ENCODE measurements at regions of chr15 and their contacts with region 1.

Region 1: DNA sequence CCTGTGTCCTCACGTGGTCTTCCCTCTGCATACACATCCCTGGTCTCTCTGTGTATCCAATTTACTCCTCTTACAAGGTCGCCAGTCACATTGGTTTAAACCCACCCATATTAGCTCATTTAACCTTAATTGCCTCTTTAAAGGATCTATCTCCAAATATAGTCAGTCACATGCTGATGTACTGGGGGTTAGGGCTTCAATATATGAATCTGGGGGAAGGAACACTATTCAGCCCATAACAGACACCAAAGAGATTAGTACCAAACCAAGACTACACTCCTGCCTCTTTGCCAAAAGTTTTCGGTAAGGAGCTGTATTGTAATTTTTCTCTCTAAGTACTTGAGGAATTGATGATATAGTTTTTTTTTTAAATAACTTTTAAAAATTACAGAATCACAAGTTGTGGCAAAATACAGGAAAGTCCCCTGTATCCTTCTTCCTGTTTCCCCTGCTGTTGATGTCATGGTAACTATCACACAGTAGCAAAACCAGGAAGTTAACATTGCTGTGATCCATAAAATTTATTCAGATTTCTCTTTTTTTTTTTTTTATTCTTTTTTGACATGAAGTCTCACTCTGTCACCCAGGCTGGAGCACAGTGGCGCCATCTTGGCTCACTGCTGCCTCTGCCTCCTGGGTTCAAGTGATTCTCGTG is 67.8 kb downstream of the SLCO3A1 start:
- DNase-seq: no peak
- H3K4me3 Mint-ChIP-seq: peak overlapping the region; percentile 31
- H3K27ac Mint-ChIP-seq: peak overlapping the region; percentile 50
- H3K4me1 Mint-ChIP-seq: peaks cover 38% of the 10 kb centered on the region
- H3K27me3 Mint-ChIP-seq: no peaks in the 10 kb centered on the region

Region 2: DNA sequence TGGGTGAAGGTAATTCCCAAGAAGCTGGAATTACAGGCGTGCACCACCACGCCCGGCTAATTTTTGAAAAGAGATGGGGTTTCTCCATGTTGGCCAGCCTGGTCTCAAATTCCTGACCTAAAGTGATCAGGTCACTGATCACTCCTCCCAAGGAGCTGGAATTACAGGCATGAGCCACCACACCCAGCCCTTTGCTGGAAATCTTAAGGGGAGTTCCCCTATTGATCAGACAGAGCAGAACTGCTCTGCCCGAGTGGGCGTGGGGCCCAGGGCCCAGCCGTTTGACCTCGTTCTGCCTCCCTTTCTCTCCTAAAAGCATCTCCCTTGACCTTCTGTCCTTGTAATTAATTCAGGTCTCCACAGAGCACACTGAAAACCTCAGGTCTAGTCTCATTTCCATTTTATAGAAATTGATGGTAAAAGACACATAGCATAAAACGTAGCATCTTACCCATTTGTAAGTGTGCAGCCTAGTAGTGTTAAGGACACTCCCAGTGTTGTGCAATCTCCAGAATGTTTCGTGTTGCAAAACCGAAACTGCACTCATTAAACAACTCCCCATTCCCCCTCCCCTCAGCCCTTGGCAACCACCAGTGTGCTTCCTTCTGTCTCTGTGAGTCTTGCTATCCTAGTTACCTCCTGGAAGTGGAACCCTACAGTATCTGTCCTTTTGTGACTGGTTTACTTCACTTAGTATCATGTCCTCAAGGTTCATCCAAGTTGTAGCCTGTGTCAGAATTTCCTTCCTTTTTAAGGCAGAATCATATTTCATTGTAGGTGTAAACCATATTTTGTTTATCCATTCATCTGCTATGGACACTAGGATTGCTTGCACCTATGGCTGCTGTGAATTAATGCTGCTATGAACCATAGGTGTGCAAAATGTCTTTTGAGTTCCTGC is 21.6 kb after region 1 on chr15:
- intact Hi-C with region 1: loop called (anchors 2 kb)
- DNase-seq: peak; percentile 44
- H3K4me3 Mint-ChIP-seq: peak overlapping the region; percentile 42
- H3K27ac Mint-ChIP-seq: peak overlapping the region; percentile 84
- H3K4me1 Mint-ChIP-seq: peaks cover 40% of the 10 kb centered on the region
- H3K27me3 Mint-ChIP-seq: no peaks in the 10 kb centered on the region

Region 3: GRCh38 chr15:91961357-91961756 is 40.0 kb after region 1 on chr15:
- intact Hi-C with region 1: loop called (anchors 5 kb)
- DNase-seq: no peak
- H3K4me3 Mint-ChIP-seq: no peak overlapping the region
- H3K27ac Mint-ChIP-seq: peak overlapping the region; percentile 22
- H3K4me1 Mint-ChIP-seq: peaks cover 17% of the 10 kb centered on the region
- H3K27me3 Mint-ChIP-seq: no peaks in the 10 kb centered on the region

Measured in activated T-helper 1 cell treated with anti-CD3 and anti-CD28 coated beads, Interleukin-12 subunit alpha, Interleukin-12 subunit beta, Interleukin-2, Interleukin-4 antibody, amounts not matched to agents 30 ng/mL and 10 ng/mL and 1 ng/mL, durations not matched to agents 14 hours and 24 hours and 36 hours (primary cell).